Gastrocnemius medialis (tissue), 4 donors: ENCODE measurements at regions of chr11 and their contacts with region 1.

Region 1: GRCh38 chr11:111422494-111423249 is 43.6 kb upstream of the POU2AF1 start:
- DNase-seq: no peak
- ATAC-seq: peak; percentile 38 to 58
- H3K4me3 ChIP-seq: no peak overlapping the region
- H3K27ac ChIP-seq: no peak overlapping the region
- H3K4me1 ChIP-seq: peaks cover 7 to 14% of the 10 kb centered on the region in 2 donors
- H3K27me3 ChIP-seq: no peaks in the 10 kb centered on the region
- CTCF ChIP-seq: peak; percentile 21 to 66 (median 57)
- POLR2A ChIP-seq: no peak

Region 2: GRCh38 chr11:111344032-111344431 is 78.6 kb before region 1 on chr11:
- in situ Hi-C with region 1: no loop called
- intact Hi-C with region 1: loop called (anchors 10 kb)
- DNase-seq: peak; percentile 45 to 71
- ATAC-seq: peak; percentile 66 to 70
- H3K4me3 ChIP-seq: no peak overlapping the region
- H3K27ac ChIP-seq: no peak overlapping the region
- H3K4me1 ChIP-seq: no peaks in the 10 kb centered on the region
- H3K27me3 ChIP-seq: no peaks in the 10 kb centered on the region
- CTCF ChIP-seq: no peak
- POLR2A ChIP-seq: no peak